Heart left ventricle (tissue), 16 donors: ENCODE measurements at regions of chr2 and their contacts with region 1.

Region 1: DNA sequence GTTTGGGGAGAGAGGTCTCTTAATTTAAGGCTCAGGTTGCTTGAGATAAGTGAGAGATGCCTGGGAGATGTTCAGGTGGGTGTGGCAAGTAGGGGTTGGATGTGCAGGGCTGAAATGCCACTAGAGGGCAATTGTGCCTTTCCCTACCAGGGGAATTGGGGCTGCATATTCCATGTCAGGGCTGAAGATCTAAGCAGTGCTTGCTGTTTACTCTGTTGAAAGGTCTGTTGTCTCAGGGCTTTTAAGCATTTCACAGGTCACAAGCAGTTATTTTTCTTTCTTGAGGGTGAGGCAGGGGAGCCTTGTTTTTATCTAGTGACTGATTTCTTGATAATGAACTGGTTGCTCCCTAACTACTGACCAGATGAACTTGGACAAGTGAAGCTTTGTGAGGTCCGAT is 7.9 kb downstream of the CCDC85A start:
- DNase-seq: peak in 3 of 5 donors; percentile 16 to 28 (median 22)
- ATAC-seq: peak in 3 of 4 donors; percentile 75 to 83 (median 78)
- H3K4me3 ChIP-seq: no peak overlapping the region
- H3K27ac ChIP-seq: no peak overlapping the region
- H3K4me1 ChIP-seq: peaks cover 0 to 21% (median 3%) of the 10 kb centered on the region in 12 donors
- H3K27me3 ChIP-seq: peaks cover 0 to 8% (median 0%) of the 10 kb centered on the region in 9 donors
- CTCF ChIP-seq: peak; percentile 30 to 68 (median 56)
- POLR2A ChIP-seq: no peak

Region 2: DNA sequence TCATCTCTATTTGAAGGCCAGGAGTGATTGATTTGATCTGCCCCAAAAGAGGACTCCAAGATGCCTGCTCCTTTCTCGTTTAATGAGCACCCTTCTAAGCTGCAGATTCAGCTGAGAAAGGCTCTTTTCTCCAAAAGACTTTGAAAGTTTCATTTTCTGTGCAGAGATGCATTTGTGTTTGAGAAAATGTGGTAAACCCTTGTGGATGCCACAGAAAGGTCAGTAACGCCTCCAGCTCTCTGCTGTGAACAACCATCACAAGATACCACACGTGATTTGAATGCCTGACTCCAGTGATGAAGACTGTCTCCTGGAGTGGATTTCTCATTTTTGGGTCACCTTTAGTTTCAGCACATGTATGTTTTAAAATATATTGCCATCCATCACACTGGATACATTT is 42.9 kb before region 1 on chr2:
- intact Hi-C with region 1: no loop called
- DNase-seq: no peak
- ATAC-seq: no peak
- H3K4me3 ChIP-seq: no peak overlapping the region
- H3K27ac ChIP-seq: no peak overlapping the region
- H3K4me1 ChIP-seq: no peaks in the 10 kb centered on the region
- H3K27me3 ChIP-seq: no peaks in the 10 kb centered on the region
- CTCF ChIP-seq: no peak
- POLR2A ChIP-seq: no peak

Region 3: DNA sequence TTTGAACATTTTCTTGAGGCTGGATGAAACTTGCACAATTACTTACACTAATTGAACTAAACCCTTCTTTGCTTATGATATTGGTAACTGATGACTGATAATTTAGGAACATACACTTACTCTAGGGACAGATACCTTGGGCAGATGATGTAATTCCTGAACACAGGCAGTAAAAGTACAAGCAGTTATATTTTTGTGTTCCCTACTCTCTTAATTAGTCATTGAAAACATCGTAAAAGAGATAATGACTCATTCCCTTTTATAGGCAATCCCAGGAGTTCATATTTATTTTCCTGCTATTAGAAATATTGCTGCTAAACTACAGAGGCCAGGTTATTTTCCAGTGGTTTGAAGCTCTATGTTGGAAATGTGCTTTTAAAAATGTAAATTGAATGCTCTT is 38.5 kb after region 1 on chr2:
- intact Hi-C with region 1: no loop called
- DNase-seq: no peak
- ATAC-seq: no peak
- H3K4me3 ChIP-seq: no peak overlapping the region
- H3K27ac ChIP-seq: no peak overlapping the region
- H3K4me1 ChIP-seq: no peaks in the 10 kb centered on the region
- H3K27me3 ChIP-seq: no peaks in the 10 kb centered on the region
- CTCF ChIP-seq: no peak
- POLR2A ChIP-seq: no peak

Region 4: GRCh38 chr2:56313500-56313921 is 121.8 kb after region 1 on chr2:
- intact Hi-C with region 1: loop called in 3 of 10 experiments (anchors 5 to 10 kb)
- DNase-seq: no peak
- ATAC-seq: no peak
- H3K4me3 ChIP-seq: no peak overlapping the region
- H3K27ac ChIP-seq: peak overlapping the region in 10 of 12 donors; percentile 16 to 75 (median 65)
- H3K4me1 ChIP-seq: peaks cover 0 to 30% (median 10%) of the 10 kb centered on the region in 12 donors
- H3K27me3 ChIP-seq: no peaks in the 10 kb centered on the region
- CTCF ChIP-seq: no peak
- POLR2A ChIP-seq: no peak

Region 5: DNA sequence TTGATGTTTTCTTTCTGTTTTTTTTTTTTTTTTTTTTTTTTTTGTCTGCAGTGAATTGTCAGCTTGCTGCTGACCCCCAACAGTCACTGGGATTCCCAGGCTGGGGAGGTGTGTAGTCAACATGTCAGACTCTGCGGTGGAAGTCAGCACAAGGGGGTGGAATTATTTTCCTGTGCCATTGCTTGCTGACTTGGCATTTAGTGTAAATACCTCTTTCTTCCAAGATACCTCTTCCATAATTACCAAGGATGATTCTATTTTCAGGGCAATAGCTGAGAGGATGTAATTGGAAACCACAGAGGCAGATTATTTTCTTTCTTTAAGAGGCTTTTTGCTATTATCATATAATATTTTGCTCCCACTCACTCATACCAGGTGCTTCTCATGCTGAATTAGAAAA is 258.4 kb after region 1 on chr2:
- intact Hi-C with region 1: loop called in 1 of 10 experiments (anchors 10 kb)
- DNase-seq: no peak
- ATAC-seq: no peak
- H3K4me3 ChIP-seq: no peak overlapping the region
- H3K27ac ChIP-seq: no peak overlapping the region
- H3K4me1 ChIP-seq: no peaks in the 10 kb centered on the region
- H3K27me3 ChIP-seq: no peaks in the 10 kb centered on the region
- CTCF ChIP-seq: no peak
- POLR2A ChIP-seq: no peak

Region 6: DNA sequence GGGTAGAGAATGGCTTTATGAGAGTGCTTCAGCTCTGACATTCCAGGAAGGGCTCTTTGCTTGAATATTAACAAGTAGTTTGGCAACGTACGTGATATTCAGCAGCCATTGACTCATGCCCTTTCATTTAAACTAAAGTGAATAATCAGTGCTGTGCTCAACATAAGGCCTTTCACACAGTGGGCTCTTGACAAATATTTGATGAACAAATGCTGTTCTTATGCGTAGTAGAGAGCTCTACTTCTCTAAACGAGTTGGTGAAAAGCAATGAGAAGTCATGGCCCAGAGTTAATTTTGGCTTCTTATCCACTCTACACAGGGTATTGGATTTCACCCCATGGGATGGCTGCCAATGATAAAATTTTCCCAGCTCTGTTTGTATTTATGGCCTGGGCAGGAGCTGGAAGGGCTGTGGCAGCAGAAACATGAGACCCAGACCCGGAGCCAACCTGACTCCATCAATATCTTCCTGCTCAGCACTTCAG is 331.0 kb after region 1 on chr2:
- intact Hi-C with region 1: loop called in 2 of 10 experiments (anchors 10 kb)
- DNase-seq: peak in 4 of 5 donors; percentile 51 to 64 (median 60)
- ATAC-seq: peak; percentile 95 to 97 (median 96)
- H3K4me3 ChIP-seq: peak overlapping the region in 1 of 12 donors; percentile 5
- H3K27ac ChIP-seq: peak overlapping the region; percentile 12 to 84 (median 69)
- H3K4me1 ChIP-seq: peaks cover 0 to 9% (median 3%) of the 10 kb centered on the region in 12 donors
- H3K27me3 ChIP-seq: no peaks in the 10 kb centered on the region
- CTCF ChIP-seq: no peak
- POLR2A ChIP-seq: no peak